ENCODE measurements at regions of chr20 and their contacts with region 1.

Region 1: DNA sequence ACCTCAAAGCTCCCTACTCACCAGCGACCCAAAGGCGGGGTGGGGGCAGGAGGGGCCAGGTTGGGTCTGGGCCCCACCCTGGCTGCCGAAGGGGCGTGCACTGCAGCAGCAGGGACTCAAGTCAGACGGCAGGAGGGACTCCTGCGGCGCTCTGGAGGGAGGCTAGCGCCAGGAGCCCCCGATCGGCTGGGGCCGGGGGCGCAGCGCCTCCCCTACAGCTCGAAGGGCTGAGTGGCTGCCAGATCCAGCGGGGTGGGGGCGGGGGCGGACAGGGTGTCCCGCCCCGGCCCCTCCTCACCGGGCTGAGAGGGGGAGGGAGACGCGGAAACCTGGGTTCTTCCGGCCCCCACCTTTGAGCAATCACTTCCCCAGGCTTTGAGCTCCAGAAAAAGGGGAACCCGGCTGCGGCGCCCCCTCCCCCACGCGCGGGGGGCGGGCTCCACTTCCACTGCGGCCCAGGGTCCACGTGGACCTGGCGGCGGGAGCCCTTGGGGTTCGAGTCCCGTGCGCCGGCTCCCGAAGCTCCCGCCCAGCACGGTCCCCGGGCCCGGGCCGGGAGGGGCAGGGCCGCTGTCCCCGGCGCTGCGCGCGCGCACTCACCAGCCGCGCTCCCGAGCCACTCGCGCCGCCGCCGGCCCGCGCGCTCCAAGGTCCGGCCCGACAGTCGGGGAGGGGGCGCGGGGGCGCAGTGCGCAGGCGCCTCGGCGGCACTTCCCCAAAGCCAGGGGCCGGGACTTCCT is at the start of gene RGS19:
- DNase-seq: peak; percentile 75
- ATAC-seq: peak; percentile 11
- H3K4me3 Mint-ChIP-seq: peak within 1 kb of the TSS; percentile 84
- H3K27ac Mint-ChIP-seq: peak within 1 kb of the TSS; percentile 65
- H3K4me1 Mint-ChIP-seq: peaks cover 24% of the 10 kb centered on the region
- H3K27me3 Mint-ChIP-seq: peaks cover 3% of the 10 kb centered on the region
- CTCF ChIP-seq: peak; percentile 11
- total RNA-seq, gene RGS19: 42.5 to 44.1 TPM

Region 2: GRCh38 chr20:64101731-64102621 is 22.5 kb after region 1 on chr20:
- CTCF ChIA-PET with region 1: interaction called, 15 read pairs
- POLR2A ChIA-PET with region 1: interaction called, 3 read pairs
- intact Hi-C with region 1: no loop called
- DNase-seq: peak; percentile 79
- ATAC-seq: peak; percentile 82
- H3K4me3 Mint-ChIP-seq: peak overlapping the region; percentile 46
- H3K27ac Mint-ChIP-seq: no peak overlapping the region
- H3K4me1 Mint-ChIP-seq: peaks cover 16% of the 10 kb centered on the region
- H3K27me3 Mint-ChIP-seq: peaks cover 14% of the 10 kb centered on the region
- CTCF ChIP-seq: peak; percentile 98

Region 3: GRCh38 chr20:64119681-64120341 is 40.4 kb after region 1 on chr20:
- CTCF ChIA-PET with region 1: interaction called, 61 read pairs
- POLR2A ChIA-PET with region 1: interaction called, 3 read pairs
- intact Hi-C with region 1: loop called (anchors 5 kb)
- DNase-seq: peak; percentile 15
- ATAC-seq: peak; percentile 17
- H3K4me3 Mint-ChIP-seq: peak overlapping the region; percentile 51
- H3K27ac Mint-ChIP-seq: peak overlapping the region; percentile 80
- H3K4me1 Mint-ChIP-seq: peaks cover 9% of the 10 kb centered on the region
- H3K27me3 Mint-ChIP-seq: peaks cover 7% of the 10 kb centered on the region
- CTCF ChIP-seq: no peak

Measured in activated CD8-positive, alpha-beta T cell treated with anti-CD3 and anti-CD28 coated beads for 36 hours (primary cell).